CD4-positive, alpha-beta T cell (primary cell): ENCODE measurements at regions of chr12 and their contacts with region 1.

Region 1: GRCh38 chr12:124767066-124767821 is 96.4 kb downstream of the SCARB1 start:
- DNase-seq: peak; percentile 69 to 89 (median 80)
- ATAC-seq: peak; percentile 94
- H3K4me3 ChIP-seq: no peak overlapping the region
- H3K4me3 Mint-ChIP-seq: no peak overlapping the region
- H3K27ac ChIP-seq: no peak overlapping the region
- H3K27ac Mint-ChIP-seq: no peak overlapping the region
- H3K4me1 ChIP-seq: peaks cover 15% of the 10 kb centered on the region
- H3K4me1 Mint-ChIP-seq: peaks cover 20% of the 10 kb centered on the region
- H3K27me3 ChIP-seq: no peaks in the 10 kb centered on the region
- H3K27me3 Mint-ChIP-seq: peaks cover 5% of the 10 kb centered on the region
- CTCF ChIP-seq: peak; percentile 99

Region 2: DNA sequence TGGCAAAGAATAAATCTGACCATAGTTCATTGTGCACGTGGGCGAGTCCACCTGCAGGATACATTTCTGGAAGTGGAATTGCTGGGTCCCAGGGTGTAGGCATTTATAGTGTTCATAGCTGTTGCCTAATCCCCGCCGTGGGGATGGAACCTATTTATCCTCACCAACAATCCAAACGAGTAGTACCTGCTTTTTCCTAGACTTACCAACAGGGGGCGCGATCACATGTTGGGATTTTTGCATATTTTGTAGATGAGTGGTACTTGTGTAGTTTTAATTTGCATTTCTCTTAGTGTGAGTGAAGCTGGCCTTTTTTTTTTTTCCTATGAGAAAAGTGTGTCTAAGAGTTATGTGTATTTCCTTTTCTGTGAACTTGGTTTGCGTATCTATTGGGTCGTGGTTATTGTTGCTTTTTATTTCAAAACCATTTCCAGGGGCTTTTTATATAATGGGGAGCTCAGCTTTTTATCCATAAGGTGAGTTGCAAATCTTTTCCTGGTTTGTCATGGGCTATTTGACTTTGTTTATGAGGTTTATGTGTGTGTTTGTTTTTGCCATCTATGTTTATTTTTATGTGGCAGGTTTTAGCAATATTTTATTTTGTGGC is 861.8 kb before region 1 on chr12:
- CTCF ChIA-PET with region 1: no interaction called
- POLR2A ChIA-PET with region 1: no interaction called
- intact Hi-C with region 1: loop called in 1 of 2 experiments (anchors 10 kb)
- DNase-seq: peak; percentile 42 to 86 (median 60)
- ATAC-seq: peak; percentile 73
- H3K4me3 ChIP-seq: no peak overlapping the region
- H3K4me3 Mint-ChIP-seq: no peak overlapping the region
- H3K27ac ChIP-seq: no peak overlapping the region
- H3K27ac Mint-ChIP-seq: no peak overlapping the region
- H3K4me1 ChIP-seq: peaks cover 4% of the 10 kb centered on the region
- H3K4me1 Mint-ChIP-seq: peaks cover 12% of the 10 kb centered on the region
- H3K27me3 ChIP-seq: no peaks in the 10 kb centered on the region
- H3K27me3 Mint-ChIP-seq: no peaks in the 10 kb centered on the region
- CTCF ChIP-seq: peak; percentile 90

Region 3: GRCh38 chr12:124036674-124037109 is 730.6 kb before region 1 on chr12:
- CTCF ChIA-PET with region 1: interaction called, 6 read pairs
- POLR2A ChIA-PET with region 1: no interaction called
- intact Hi-C with region 1: loop called (anchors 1 kb)
- DNase-seq: peak; percentile 16 to 74 (median 30)
- ATAC-seq: peak; percentile 58
- H3K4me3 ChIP-seq: no peak overlapping the region
- H3K4me3 Mint-ChIP-seq: no peak overlapping the region
- H3K27ac ChIP-seq: no peak overlapping the region
- H3K27ac Mint-ChIP-seq: no peak overlapping the region
- H3K4me1 ChIP-seq: no peaks in the 10 kb centered on the region
- H3K4me1 Mint-ChIP-seq: no peaks in the 10 kb centered on the region
- H3K27me3 ChIP-seq: no peaks in the 10 kb centered on the region
- H3K27me3 Mint-ChIP-seq: no peaks in the 10 kb centered on the region
- CTCF ChIP-seq: peak; percentile 98

Region 4: DNA sequence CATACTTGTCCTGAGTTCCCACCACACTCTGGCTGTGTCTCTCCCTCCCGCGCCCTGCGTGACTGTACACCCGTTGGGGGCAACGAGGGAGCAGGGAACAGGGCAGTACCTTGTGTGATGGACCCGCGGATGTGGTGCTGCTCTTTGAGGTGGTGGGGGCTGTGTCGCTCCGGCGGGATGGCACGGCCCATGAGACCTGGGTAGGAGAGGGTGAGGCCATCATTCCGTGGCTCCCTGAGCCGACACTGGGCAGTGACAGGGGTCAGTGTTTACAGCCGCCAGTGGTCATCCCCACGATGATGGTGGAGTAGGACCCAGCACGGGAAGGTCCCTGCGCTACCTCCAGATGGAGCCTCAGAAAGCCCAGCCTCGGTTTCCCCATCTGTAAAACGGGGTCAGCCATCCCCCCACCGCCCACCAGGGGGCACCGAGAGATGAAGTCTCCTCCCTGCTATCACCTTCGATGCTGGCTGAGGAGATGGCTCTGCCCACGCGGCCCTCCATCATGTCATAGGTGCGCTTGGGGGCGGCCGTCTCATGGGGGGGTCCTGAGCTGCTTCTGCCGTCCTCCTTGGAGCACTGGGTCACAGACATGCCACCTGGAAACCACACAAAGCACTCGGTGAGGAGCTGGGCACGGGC is 419.4 kb before region 1 on chr12:
- CTCF ChIA-PET with region 1: interaction called, 3 read pairs
- POLR2A ChIA-PET with region 1: no interaction called
- intact Hi-C with region 1: loop called in 1 of 2 experiments (anchors 1 kb)
- DNase-seq: peak in 13 of 14 experiments; percentile 7 to 49 (median 19)
- ATAC-seq: no peak
- H3K4me3 ChIP-seq: no peak overlapping the region
- H3K4me3 Mint-ChIP-seq: no peak overlapping the region
- H3K27ac ChIP-seq: no peak overlapping the region
- H3K27ac Mint-ChIP-seq: no peak overlapping the region
- H3K4me1 ChIP-seq: no peaks in the 10 kb centered on the region
- H3K4me1 Mint-ChIP-seq: no peaks in the 10 kb centered on the region
- H3K27me3 ChIP-seq: no peaks in the 10 kb centered on the region
- H3K27me3 Mint-ChIP-seq: no peaks in the 10 kb centered on the region
- CTCF ChIP-seq: peak; percentile 56

Region 5: DNA sequence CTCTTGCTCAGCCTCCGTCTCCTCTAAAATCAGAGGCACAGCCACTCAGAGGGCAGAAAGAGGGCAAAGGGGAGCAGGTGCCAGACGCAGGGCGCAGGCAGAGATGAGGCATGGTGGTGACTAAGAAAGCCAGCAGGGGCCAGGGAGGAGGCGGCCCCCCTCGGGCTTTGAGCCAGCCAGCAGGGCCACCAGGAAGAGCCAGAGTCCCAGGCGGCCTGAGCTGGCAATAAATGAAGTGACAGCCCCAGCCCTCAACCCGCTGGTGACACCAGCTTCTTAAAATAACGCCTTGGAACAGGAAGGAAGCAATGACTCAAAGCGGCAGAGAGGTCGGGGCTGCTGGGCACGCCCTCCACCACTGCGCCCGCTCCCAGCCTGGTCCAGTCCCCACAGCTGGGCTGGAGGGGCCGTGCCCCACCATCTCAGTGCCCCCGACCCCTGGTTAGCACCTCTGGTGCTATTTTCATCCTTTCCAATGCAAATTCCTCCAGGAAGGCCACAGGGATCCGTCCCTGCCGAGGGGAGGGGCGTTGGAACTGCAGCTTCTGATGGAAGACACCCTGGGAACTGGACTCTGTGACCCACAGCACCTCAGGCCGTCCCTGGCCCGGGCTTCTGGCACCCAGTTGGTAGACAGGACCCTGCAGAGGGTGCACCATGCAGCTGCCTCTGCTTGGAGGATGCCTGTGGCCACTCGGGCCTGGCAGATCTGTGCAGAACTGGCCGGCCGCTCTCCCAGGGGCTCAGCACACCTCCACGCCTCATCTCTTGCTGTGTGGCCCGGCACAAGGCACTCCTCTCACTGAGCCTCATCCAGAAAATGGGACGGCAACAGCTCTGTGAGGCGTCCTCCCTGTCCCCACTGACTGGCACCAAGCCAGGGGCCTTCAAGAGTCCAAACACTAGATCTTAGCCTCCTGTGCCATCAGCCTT is 313.6 kb before region 1 on chr12:
- CTCF ChIA-PET with region 1: no interaction called
- POLR2A ChIA-PET with region 1: no interaction called
- intact Hi-C with region 1: loop called in 1 of 2 experiments (anchors 10 kb)
- DNase-seq: peak; percentile 53 to 93 (median 77)
- ATAC-seq: peak; percentile 78
- H3K4me3 ChIP-seq: peak overlapping the region; percentile 43
- H3K4me3 Mint-ChIP-seq: peak overlapping the region; percentile 80
- H3K27ac ChIP-seq: peak overlapping the region; percentile 68 to 74
- H3K27ac Mint-ChIP-seq: peak overlapping the region; percentile 78
- H3K4me1 ChIP-seq: peaks cover 91% of the 10 kb centered on the region
- H3K4me1 Mint-ChIP-seq: peaks cover 69% of the 10 kb centered on the region
- H3K27me3 ChIP-seq: no peaks in the 10 kb centered on the region
- H3K27me3 Mint-ChIP-seq: no peaks in the 10 kb centered on the region
- CTCF ChIP-seq: no peak

Region 6: DNA sequence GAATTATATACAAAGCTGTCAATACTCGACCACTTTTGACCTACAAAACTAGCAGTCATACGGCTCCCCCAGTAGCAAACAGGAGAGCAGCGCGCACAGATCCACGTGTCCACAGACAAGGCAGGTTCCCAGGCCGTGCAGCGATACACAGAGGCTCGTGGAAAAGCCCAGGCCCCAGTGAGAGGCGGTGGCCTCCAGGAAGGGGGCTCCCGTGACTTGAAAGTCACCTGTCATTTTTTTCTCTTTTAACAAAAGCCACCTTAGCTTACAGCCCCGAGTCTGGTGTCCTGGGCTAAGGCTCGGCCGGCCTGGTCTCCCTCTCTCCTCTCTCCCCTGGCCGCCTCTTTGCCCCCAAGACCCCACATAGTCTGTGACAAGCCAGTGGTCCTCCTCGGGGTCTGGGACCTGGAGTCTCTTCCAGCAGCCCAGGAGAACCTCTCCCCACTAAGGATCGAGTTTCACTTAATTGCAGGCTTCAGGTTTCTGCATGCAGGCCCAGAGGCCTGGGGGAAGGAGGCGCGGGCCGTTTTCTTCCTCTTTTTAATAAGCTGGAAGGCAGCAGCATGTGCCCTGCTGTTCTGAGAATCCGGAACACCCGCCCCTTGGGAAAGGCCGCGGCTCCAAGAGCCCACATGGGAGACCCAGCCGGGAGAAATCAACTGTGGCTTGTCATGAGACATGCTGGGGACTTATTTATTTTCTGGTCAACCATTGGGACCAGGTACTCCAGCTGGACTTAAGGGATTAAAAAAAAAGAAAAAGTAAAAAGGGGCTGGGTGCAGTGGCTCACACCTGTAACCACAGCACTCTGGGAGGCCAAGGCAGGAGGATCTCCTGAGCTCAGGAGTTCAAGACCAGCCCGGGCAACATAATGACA is 215.7 kb before region 1 on chr12:
- CTCF ChIA-PET with region 1: no interaction called
- POLR2A ChIA-PET with region 1: no interaction called
- intact Hi-C with region 1: loop called (anchors 2 kb)
- DNase-seq: peak in 2 of 14 experiments; percentile 55
- ATAC-seq: peak; percentile 25
- H3K4me3 ChIP-seq: no peak overlapping the region
- H3K4me3 Mint-ChIP-seq: no peak overlapping the region
- H3K27ac ChIP-seq: no peak overlapping the region
- H3K27ac Mint-ChIP-seq: no peak overlapping the region
- H3K4me1 ChIP-seq: peaks cover 77% of the 10 kb centered on the region
- H3K4me1 Mint-ChIP-seq: peaks cover 83% of the 10 kb centered on the region
- H3K27me3 ChIP-seq: no peaks in the 10 kb centered on the region
- H3K27me3 Mint-ChIP-seq: no peaks in the 10 kb centered on the region
- CTCF ChIP-seq: no peak

Region 7: GRCh38 chr12:124609041-124609995 is 157.9 kb before region 1 on chr12:
- CTCF ChIA-PET with region 1: no interaction called
- POLR2A ChIA-PET with region 1: no interaction called
- intact Hi-C with region 1: loop called in 1 of 2 experiments (anchors 5 kb)
- DNase-seq: peak; percentile 79 to 95 (median 90)
- ATAC-seq: peak; percentile 93
- H3K4me3 ChIP-seq: peak overlapping the region; percentile 37
- H3K4me3 Mint-ChIP-seq: peak overlapping the region; percentile 76
- H3K27ac ChIP-seq: no peak overlapping the region
- H3K27ac Mint-ChIP-seq: peak overlapping the region; percentile 60
- H3K4me1 ChIP-seq: peaks cover 37% of the 10 kb centered on the region
- H3K4me1 Mint-ChIP-seq: peaks cover 46% of the 10 kb centered on the region
- H3K27me3 ChIP-seq: no peaks in the 10 kb centered on the region
- H3K27me3 Mint-ChIP-seq: no peaks in the 10 kb centered on the region
- CTCF ChIP-seq: peak; percentile 26